CD4-positive, alpha-beta T cell (primary cell): ENCODE measurements at regions of chrX and their contacts with region 1.

Region 1: DNA sequence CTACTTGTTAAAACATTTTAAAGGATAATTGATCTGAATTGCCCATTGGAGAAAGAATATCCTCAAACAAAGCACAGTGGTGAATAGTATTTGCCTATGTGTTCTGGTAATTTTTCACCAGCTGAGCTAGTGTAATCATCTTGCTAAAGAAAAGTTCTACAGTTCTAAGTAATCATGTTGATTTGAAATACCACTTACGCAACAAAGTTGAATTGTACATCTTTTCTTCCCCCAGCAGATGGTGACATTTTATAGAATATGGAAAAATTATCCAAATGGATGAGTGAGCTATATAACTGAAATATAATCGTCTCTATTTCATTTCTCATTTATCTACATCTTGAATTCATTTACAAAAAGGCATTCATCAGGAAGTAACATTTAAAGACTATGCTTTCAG is 9.7 kb upstream of the ZNF674 start:
- DNase-seq: peak in 2 of 14 experiments; percentile 23 to 35
- ATAC-seq: no peak
- H3K4me3 ChIP-seq: no peak overlapping the region
- H3K4me3 Mint-ChIP-seq: no peak overlapping the region
- H3K27ac ChIP-seq: no peak overlapping the region
- H3K27ac Mint-ChIP-seq: no peak overlapping the region
- H3K4me1 ChIP-seq: no peaks in the 10 kb centered on the region
- H3K4me1 Mint-ChIP-seq: peaks cover 4% of the 10 kb centered on the region
- H3K27me3 ChIP-seq: no peaks in the 10 kb centered on the region
- H3K27me3 Mint-ChIP-seq: no peaks in the 10 kb centered on the region
- CTCF ChIP-seq: peak; percentile 32

Region 2: GRCh38 chrX:46543441-46543840 is 11.5 kb before region 1 on chrX:
- CTCF ChIA-PET with region 1: no interaction called
- POLR2A ChIA-PET with region 1: no interaction called
- intact Hi-C with region 1: no loop called
- DNase-seq: no peak
- ATAC-seq: no peak
- H3K4me3 ChIP-seq: no peak overlapping the region
- H3K4me3 Mint-ChIP-seq: peak overlapping the region; percentile 93
- H3K27ac ChIP-seq: no peak overlapping the region
- H3K27ac Mint-ChIP-seq: no peak overlapping the region
- H3K4me1 ChIP-seq: peaks cover 32% of the 10 kb centered on the region
- H3K4me1 Mint-ChIP-seq: peaks cover 25% of the 10 kb centered on the region
- H3K27me3 ChIP-seq: no peaks in the 10 kb centered on the region
- H3K27me3 Mint-ChIP-seq: no peaks in the 10 kb centered on the region
- CTCF ChIP-seq: no peak

Region 3: GRCh38 chrX:46642145-46642544 is 87.2 kb after region 1 on chrX:
- CTCF ChIA-PET with region 1: interaction called, 8 read pairs
- POLR2A ChIA-PET with region 1: no interaction called
- intact Hi-C with region 1: loop called (anchors 1 to 2 kb)
- DNase-seq: peak in 4 of 14 experiments; percentile 20 to 57 (median 52)
- ATAC-seq: peak; percentile 73
- H3K4me3 ChIP-seq: no peak overlapping the region
- H3K4me3 Mint-ChIP-seq: no peak overlapping the region
- H3K27ac ChIP-seq: no peak overlapping the region
- H3K27ac Mint-ChIP-seq: no peak overlapping the region
- H3K4me1 ChIP-seq: peaks cover 5% of the 10 kb centered on the region
- H3K4me1 Mint-ChIP-seq: peaks cover 5% of the 10 kb centered on the region
- H3K27me3 ChIP-seq: no peaks in the 10 kb centered on the region
- H3K27me3 Mint-ChIP-seq: no peaks in the 10 kb centered on the region
- CTCF ChIP-seq: peak; percentile 52

Region 4: DNA sequence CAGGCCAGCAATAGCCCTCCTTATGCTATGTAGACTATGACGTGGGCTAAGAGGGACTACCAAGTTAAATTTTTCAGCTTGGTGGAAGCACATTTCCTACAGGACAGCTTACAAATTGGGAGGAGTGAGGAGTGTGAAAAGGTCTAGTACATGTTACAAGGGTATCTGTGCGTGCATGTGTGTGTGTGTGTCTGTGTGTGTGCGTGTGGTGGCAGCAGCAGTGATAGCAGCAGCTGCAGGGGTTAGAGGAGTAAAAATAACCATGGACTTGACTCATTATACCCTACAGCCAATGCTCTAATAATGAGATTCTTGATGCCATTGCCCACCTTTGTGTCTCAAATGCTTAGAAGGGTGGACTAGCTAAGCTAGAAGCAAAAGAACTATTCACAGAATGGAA is 115.4 kb after region 1 on chrX:
- CTCF ChIA-PET with region 1: no interaction called
- POLR2A ChIA-PET with region 1: no interaction called
- intact Hi-C with region 1: no loop called
- DNase-seq: no peak
- ATAC-seq: no peak
- H3K4me3 ChIP-seq: no peak overlapping the region
- H3K4me3 Mint-ChIP-seq: no peak overlapping the region
- H3K27ac ChIP-seq: no peak overlapping the region
- H3K27ac Mint-ChIP-seq: no peak overlapping the region
- H3K4me1 ChIP-seq: no peaks in the 10 kb centered on the region
- H3K4me1 Mint-ChIP-seq: no peaks in the 10 kb centered on the region
- H3K27me3 ChIP-seq: no peaks in the 10 kb centered on the region
- H3K27me3 Mint-ChIP-seq: no peaks in the 10 kb centered on the region
- CTCF ChIP-seq: no peak

Region 5: GRCh38 chrX:46686003-46686645 is 131.2 kb after region 1 on chrX:
- CTCF ChIA-PET with region 1: no interaction called
- POLR2A ChIA-PET with region 1: no interaction called
- intact Hi-C with region 1: loop called (anchors 5 kb)
- DNase-seq: peak in 13 of 14 experiments; percentile 1 to 68 (median 20)
- ATAC-seq: peak; percentile 44
- H3K4me3 ChIP-seq: no peak overlapping the region
- H3K4me3 Mint-ChIP-seq: no peak overlapping the region
- H3K27ac ChIP-seq: no peak overlapping the region
- H3K27ac Mint-ChIP-seq: no peak overlapping the region
- H3K4me1 ChIP-seq: no peaks in the 10 kb centered on the region
- H3K4me1 Mint-ChIP-seq: no peaks in the 10 kb centered on the region
- H3K27me3 ChIP-seq: no peaks in the 10 kb centered on the region
- H3K27me3 Mint-ChIP-seq: no peaks in the 10 kb centered on the region
- CTCF ChIP-seq: peak; percentile 60

Region 6: DNA sequence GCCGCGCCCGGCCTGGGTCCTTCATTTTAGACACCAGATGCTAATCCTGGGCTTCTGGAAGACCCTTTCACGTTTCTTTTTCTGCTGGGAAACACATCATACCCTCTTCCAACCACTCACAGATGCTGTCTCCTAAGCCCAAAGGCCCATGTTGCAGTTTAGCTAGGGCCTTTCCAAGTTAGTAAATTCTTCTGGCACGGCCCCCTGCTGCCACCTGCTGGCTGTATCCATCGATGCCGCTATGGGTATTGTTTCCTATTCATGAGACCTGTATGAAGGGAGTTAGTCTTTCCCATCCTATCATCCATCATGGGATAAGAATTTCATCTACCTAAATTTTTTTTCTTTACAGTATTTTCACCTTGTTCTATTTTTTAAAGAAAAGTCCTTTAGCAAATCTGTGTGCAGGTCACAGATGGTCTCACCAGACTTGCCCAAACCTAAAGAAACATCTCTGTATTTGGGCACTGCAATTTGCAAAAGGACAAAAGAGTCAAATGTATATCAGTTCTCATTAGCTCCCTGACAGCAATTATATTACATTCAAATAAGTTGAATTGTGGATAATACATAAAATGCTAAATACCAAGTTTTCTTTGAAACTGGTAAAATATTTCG is 241.7 kb after region 1 on chrX:
- CTCF ChIA-PET with region 1: no interaction called
- POLR2A ChIA-PET with region 1: no interaction called
- intact Hi-C with region 1: loop called in 1 of 2 experiments (anchors 10 kb)
- DNase-seq: peak; percentile 42 to 77 (median 60)
- ATAC-seq: peak; percentile 51
- H3K4me3 ChIP-seq: no peak overlapping the region
- H3K4me3 Mint-ChIP-seq: no peak overlapping the region
- H3K27ac ChIP-seq: no peak overlapping the region
- H3K27ac Mint-ChIP-seq: no peak overlapping the region
- H3K4me1 ChIP-seq: peaks cover 2% of the 10 kb centered on the region
- H3K4me1 Mint-ChIP-seq: peaks cover 9% of the 10 kb centered on the region
- H3K27me3 ChIP-seq: no peaks in the 10 kb centered on the region
- H3K27me3 Mint-ChIP-seq: no peaks in the 10 kb centered on the region
- CTCF ChIP-seq: peak; percentile 68